Activated B cell treated with CpG ODN at 0.5 μM for 24 hours (primary cell): ENCODE measurements at regions of chr6 and their contacts with region 1.

Region 1: GRCh38 chr6:27893059-27893835 is 18.9 kb downstream of the OR2B2 start:
- DNase-seq: peak; percentile 67
- ATAC-seq: peak; percentile 71
- H3K4me3 Mint-ChIP-seq: no peak overlapping the region
- H3K27ac Mint-ChIP-seq: no peak overlapping the region
- H3K4me1 Mint-ChIP-seq: peaks cover 32% of the 10 kb centered on the region
- H3K27me3 Mint-ChIP-seq: no peaks in the 10 kb centered on the region
- CTCF ChIP-seq: no peak

Region 2: GRCh38 chr6:26183581-26184366 is 1709.5 kb before region 1 on chr6:
- CTCF ChIA-PET with region 1: no interaction called
- POLR2A ChIA-PET with region 1: interaction called, 14 read pairs
- intact Hi-C with region 1: no loop called
- DNase-seq: peak; percentile 60
- ATAC-seq: peak; percentile 86
- H3K4me3 Mint-ChIP-seq: peak overlapping the region; percentile 98
- H3K27ac Mint-ChIP-seq: peak overlapping the region; percentile 91
- H3K4me1 Mint-ChIP-seq: peaks cover 30% of the 10 kb centered on the region
- H3K27me3 Mint-ChIP-seq: no peaks in the 10 kb centered on the region
- CTCF ChIP-seq: no peak

Region 3: DNA sequence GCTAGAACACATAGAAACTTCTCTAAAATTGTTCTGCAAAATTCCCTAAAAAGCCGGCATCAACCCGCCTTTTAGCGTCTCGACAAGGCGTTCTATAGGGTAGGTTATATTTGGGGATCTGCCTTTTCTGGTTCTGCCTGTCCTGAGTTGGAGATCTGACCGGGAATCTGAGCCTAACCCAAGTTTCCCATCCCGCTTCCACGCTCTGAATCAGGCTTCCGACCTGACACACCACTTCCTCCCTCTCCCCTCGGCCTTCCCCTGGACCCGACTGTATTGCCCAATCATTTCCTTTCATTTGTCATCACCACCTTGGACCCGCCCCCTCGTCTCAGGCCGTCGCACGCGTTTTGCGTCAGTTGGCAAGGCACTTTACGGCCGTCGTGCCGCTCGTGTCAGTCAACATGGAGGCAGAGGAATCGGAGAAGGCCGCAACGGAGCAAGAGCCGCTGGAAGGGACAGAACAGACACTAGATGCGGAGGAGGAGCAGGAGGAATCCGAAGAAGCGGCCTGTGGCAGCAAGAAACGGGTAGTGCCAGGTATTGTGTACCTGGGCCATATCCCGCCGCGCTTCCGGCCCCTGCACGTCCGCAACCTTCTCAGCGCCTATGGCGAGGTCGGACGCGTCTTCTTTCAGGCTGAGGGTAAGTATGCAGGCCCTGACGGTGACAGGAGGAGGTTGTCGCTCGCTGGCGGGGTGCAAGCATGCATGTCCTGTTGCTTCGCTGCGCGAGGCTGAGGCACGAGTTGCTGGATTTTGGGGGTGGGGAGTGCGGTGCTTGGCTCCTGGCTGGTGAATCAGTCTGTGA is 1296.5 kb before region 1 on chr6 and contains the start of gene ABT1:
- CTCF ChIA-PET with region 1: no interaction called
- POLR2A ChIA-PET with region 1: interaction called, 8 read pairs
- intact Hi-C with region 1: loop called (anchors 1 kb)
- DNase-seq: peak; percentile 91
- ATAC-seq: peak; percentile 90
- H3K4me3 Mint-ChIP-seq: no peak within 1 kb of the TSS
- H3K27ac Mint-ChIP-seq: no peak within 1 kb of the TSS
- H3K4me1 Mint-ChIP-seq: peaks cover 17% of the 10 kb centered on the region
- H3K27me3 Mint-ChIP-seq: peaks cover 5% of the 10 kb centered on the region
- CTCF ChIP-seq: no peak
- total RNA-seq, gene ABT1: 30.7 and 30.8 TPM in 2 replicates

Region 4: DNA sequence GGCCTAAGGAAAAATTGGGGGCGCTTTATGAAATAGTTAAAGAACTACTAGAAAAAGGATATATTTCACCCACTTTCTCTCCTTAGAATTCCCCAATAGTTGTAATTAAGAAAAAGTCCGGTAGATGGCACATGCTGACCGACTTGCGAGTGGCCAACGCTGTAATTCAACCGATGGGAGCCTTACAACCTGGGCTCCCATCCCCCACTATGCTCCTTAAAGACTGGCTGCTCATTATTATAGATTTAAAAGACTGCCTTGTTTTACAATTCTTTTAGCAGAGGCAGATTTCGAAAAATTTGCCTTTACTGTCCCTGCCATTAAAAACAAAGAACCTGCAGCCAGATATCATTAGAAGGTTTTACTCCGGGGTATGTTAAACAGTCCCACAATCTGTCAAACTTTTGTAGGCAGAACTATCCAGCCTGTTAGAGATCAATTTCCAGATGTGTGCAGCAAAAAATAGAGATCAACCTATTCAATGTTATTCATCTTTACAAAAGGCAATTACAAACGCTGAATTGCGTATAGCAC is 704.3 kb before region 1 on chr6:
- CTCF ChIA-PET with region 1: no interaction called
- POLR2A ChIA-PET with region 1: interaction called, 3 read pairs
- intact Hi-C with region 1: loop called (anchors 1 kb)
- DNase-seq: no peak
- ATAC-seq: peak; percentile 80
- H3K4me3 Mint-ChIP-seq: peak overlapping the region; percentile 83
- H3K27ac Mint-ChIP-seq: peak overlapping the region; percentile 19
- H3K4me1 Mint-ChIP-seq: peaks cover 8% of the 10 kb centered on the region
- H3K27me3 Mint-ChIP-seq: peaks cover 2% of the 10 kb centered on the region
- CTCF ChIP-seq: no peak

Region 5: DNA sequence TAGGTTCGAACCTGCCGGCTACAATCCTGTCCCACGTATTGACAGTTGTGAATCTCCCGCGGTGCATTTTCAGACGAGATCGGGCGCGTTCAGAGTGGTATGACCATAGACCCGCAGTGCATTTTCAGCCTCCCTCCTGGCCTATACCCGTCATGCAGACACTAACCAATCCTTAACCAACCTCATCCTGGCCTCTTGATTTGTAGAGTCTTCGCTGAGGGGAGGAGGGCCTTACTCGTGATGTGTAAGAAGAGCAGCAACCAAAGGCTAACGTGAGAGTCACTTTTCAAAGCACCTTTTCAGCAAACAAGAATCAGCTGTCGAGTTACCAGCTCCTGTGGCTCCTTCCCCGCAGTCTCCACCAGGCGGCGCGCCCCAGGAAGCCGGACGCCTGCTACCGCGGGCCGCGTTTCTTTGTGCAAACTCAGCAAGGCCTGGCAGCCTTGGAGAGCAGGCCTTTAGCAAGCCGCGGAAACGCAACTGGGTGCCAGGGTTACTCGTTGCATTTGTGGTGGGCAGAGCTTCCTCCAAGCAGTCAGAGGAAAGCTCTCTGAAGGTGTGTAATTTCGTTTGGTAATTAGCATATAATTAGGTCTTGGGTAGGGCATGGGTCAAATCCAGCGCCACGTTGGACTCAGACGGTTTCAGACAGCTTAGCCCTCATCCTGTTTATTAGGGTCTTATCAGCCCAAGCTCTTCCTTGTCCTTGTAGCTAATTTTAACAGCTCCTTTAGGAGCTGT is 120.8 kb before region 1 on chr6:
- CTCF ChIA-PET with region 1: interaction called, 70 read pairs
- POLR2A ChIA-PET with region 1: interaction called, 13 read pairs
- intact Hi-C with region 1: loop called (anchors 1 kb)
- DNase-seq: peak; percentile 74
- ATAC-seq: peak; percentile 92
- H3K4me3 Mint-ChIP-seq: peak overlapping the region; percentile 57
- H3K27ac Mint-ChIP-seq: peak overlapping the region; percentile 66
- H3K4me1 Mint-ChIP-seq: peaks cover 38% of the 10 kb centered on the region
- H3K27me3 Mint-ChIP-seq: peaks cover 5% of the 10 kb centered on the region
- CTCF ChIP-seq: peak; percentile 66

Region 6: DNA sequence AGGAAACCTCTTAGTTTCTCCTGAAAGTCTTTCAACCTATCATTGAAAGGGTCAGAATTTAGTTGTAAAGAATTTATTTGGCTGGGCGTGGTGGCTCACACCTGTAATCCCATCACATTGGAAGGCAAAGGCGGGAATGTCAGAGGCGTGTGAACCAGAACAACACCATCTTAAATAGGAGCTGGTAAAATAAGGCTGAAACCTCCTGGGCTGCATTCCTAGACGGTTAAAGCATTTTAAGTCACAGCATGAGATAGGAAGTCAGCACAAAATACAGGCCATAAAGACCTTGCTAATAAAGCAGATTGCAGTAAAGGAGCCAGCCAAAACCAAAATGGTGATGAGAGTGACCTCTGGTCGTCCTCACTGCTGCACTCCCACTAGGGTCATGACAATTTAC is 10.6 kb before region 1 on chr6:
- CTCF ChIA-PET with region 1: no interaction called
- POLR2A ChIA-PET with region 1: interaction called, 20 read pairs
- intact Hi-C with region 1: no loop called
- DNase-seq: no peak
- ATAC-seq: no peak
- H3K4me3 Mint-ChIP-seq: no peak overlapping the region
- H3K27ac Mint-ChIP-seq: no peak overlapping the region
- H3K4me1 Mint-ChIP-seq: no peaks in the 10 kb centered on the region
- H3K27me3 Mint-ChIP-seq: no peaks in the 10 kb centered on the region
- CTCF ChIP-seq: no peak

Region 7: DNA sequence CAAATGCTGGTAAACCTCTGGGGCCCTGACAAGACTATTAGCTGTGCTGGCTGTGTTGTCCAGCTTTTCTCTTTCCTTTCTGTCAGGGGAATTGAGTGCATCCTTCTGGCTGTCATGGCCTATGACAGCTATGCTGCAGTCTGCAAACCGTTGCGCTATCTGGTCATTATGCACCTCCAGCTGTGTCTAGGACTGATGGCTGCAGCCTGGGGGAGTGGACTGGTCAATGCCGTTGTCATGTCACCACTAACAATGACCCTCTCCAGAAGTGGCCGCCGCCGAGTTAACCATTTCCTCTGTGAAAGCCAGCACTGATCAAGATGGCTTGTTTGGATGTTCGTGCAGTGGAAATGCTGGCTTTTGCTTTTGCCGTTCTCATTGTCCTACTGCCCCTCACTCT is 84.1 kb after region 1 on chr6:
- CTCF ChIA-PET with region 1: no interaction called
- POLR2A ChIA-PET with region 1: no interaction called
- intact Hi-C with region 1: no loop called
- DNase-seq: no peak
- ATAC-seq: no peak
- H3K4me3 Mint-ChIP-seq: no peak overlapping the region
- H3K27ac Mint-ChIP-seq: no peak overlapping the region
- H3K4me1 Mint-ChIP-seq: peaks cover 4% of the 10 kb centered on the region
- H3K27me3 Mint-ChIP-seq: no peaks in the 10 kb centered on the region
- CTCF ChIP-seq: no peak